Activated CD4-positive, alpha-beta T cell treated with anti-CD3 and anti-CD28 coated beads, Interleukin-2, amount 10 ng/mL, durations not matched to agents 24 days and 14 days (primary cell): ENCODE measurements at regions of chr4 and their contacts with region 1.

Region 1: GRCh38 chr4:98995183-98996055 is at the start of gene METAP1:
- DNase-seq: peak; percentile 98
- H3K4me3 Mint-ChIP-seq: peak within 1 kb of the TSS; percentile 89
- H3K27ac Mint-ChIP-seq: peak within 1 kb of the TSS; percentile 98
- H3K4me1 Mint-ChIP-seq: peaks cover 32% of the 10 kb centered on the region
- H3K27me3 Mint-ChIP-seq: peaks cover 3% of the 10 kb centered on the region
- total RNA-seq, gene METAP1: 61.2 and 63.3 TPM in 2 replicates

Region 2: GRCh38 chr4:98143001-98143899 is 852.2 kb before region 1 on chr4 and contains the start of gene STPG2:
- intact Hi-C with region 1: loop called (anchors 1 kb)
- DNase-seq: peak; percentile 98
- H3K4me3 Mint-ChIP-seq: peak within 1 kb of the TSS; percentile 95
- H3K27ac Mint-ChIP-seq: peak within 1 kb of the TSS; percentile 96
- H3K4me1 Mint-ChIP-seq: peaks cover 11% of the 10 kb centered on the region
- H3K27me3 Mint-ChIP-seq: peaks cover 14% of the 10 kb centered on the region
- total RNA-seq, gene STPG2: not detected in 2 replicates

Region 3: DNA sequence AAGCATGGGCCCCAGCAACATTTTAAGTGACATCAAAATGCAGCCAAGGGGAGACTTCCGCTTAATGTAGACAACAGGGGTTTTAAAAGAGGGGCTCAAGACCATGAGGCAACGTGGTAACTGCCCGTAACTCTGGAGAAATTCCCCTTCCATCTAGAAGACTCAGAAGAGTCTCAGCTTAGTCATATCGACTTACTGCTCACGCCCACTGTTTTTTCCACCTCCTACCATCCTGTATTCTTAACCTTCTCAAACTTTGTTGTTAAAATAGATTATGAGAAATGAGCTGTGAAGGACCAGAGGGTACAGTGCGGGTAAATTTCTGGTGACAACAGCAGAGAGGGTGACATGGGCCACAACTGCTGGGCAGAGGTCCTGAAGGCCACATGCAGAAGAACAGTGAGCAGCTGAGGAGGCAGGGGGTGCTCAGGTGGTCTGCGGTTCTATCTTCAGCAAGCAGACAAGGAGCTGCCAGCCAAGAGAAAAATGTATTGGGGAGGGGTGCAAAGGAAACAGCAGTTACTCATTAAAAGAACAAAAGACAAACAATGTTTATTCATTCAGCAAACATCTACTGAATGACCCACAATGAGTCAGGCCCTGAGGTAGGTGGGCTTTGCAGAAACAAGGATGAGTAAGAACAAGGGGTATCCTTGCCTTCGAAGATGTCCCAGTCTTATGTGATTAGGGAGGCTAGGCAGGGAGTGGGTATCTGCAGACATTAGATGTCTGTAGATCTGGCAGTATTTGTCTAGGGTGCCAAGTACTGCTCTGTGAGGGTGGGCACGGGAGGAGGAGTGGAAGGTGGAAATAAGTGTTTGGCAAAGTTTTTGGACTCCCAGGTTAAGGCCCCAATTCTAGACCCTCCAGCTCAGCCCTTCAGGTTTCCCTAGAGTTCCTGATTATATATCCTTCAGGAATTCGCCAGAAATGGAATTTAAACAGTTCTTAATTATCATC is 512.3 kb before region 1 on chr4:
- intact Hi-C with region 1: loop called (anchors 5 kb)
- DNase-seq: peak; percentile 75
- H3K4me3 Mint-ChIP-seq: peak overlapping the region; percentile 80
- H3K27ac Mint-ChIP-seq: peak overlapping the region; percentile 99
- H3K4me1 Mint-ChIP-seq: peaks cover 79% of the 10 kb centered on the region
- H3K27me3 Mint-ChIP-seq: no peaks in the 10 kb centered on the region

Region 4: DNA sequence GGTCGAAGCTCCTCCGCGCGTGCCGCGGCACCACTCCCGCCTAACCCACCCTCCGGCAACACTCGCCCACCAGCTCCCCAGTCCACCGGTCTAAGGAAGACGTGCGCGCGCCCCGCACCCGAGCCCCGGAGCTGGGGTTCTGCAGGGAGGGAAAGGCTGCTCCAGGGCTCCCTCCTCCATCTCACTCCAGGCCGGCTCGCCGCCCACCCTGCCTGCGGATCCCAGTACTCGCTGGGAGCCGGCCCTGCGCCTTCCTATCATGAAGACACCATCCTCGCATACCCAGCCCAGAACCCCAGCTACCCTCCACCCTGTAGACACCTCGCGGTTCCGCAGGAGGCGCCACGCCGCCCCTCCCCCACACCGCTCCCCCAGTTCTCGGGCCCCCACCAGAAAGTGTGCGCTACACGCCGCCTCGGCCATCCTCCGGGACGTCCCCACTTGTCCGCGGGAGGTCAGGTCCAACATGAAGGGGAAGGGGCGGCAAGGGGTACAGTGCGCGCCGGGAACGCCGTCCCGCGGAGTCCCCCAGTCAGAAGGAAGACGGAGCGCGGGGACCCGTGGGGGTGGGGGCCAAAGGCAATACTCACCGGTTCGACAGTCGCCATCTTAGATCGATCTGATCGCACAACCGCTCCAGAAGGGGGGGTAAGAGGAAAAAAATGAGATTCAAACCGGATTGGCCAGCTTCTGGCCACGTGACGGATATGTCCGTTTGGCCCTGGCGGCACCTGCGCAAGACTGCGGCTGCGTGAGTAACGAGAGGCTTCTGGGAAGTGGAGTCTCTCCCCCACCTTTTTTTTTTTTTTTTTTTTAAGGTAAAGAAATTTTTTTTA is 66.7 kb before region 1 on chr4 and contains the start of gene EIF4E:
- intact Hi-C with region 1: loop called (anchors 1 kb)
- DNase-seq: peak; percentile 98
- H3K4me3 Mint-ChIP-seq: peak within 1 kb of the TSS; percentile 90
- H3K27ac Mint-ChIP-seq: peak within 1 kb of the TSS; percentile 97
- H3K4me1 Mint-ChIP-seq: peaks cover 38% of the 10 kb centered on the region
- H3K27me3 Mint-ChIP-seq: no peaks in the 10 kb centered on the region
- total RNA-seq, gene EIF4E: 151 and 156 TPM in 2 replicates

Region 5: GRCh38 chr4:99024481-99025275 is 29.3 kb after region 1 on chr4:
- intact Hi-C with region 1: no loop called
- DNase-seq: no peak
- H3K4me3 Mint-ChIP-seq: no peak overlapping the region
- H3K27ac Mint-ChIP-seq: no peak overlapping the region
- H3K4me1 Mint-ChIP-seq: peaks cover 26% of the 10 kb centered on the region
- H3K27me3 Mint-ChIP-seq: no peaks in the 10 kb centered on the region

Region 6: GRCh38 chr4:99336553-99336952 is 341.1 kb after region 1 on chr4:
- intact Hi-C with region 1: no loop called
- DNase-seq: no peak
- H3K4me3 Mint-ChIP-seq: no peak overlapping the region
- H3K27ac Mint-ChIP-seq: no peak overlapping the region
- H3K4me1 Mint-ChIP-seq: no peaks in the 10 kb centered on the region
- H3K27me3 Mint-ChIP-seq: no peaks in the 10 kb centered on the region

Region 7: DNA sequence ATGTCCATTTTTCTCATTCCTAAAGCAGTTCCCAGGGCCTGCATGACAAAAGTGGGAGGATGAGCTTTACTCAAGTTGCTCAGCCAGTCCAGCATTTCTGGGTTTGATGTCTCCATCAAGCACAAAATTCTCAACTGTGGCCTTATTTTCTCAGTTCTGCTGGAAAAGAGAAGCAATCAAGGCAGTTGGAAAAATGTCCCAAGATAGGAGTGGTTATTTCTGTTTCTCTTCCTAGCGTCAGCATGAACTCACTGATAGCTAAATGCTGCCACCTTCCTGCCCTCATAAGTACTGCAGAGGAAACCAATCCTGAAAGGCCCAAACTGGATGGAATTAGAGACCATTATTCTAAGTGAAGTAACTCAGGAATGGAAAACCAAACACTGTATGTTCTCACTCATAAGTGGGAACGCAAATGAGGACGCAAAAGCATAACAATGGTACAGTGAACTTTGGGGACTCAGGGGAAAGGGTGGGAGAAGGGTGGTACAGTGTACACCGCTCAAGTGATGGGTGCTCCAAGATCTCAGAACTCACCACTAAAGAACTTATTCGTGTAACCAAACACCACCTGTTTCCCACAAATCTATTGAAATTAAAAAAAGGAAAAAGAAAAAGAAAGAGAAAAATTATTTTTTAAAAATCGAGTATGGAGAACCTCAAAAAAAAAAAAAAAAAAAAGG is 410.2 kb after region 1 on chr4:
- intact Hi-C with region 1: loop called (anchors 2 kb)
- DNase-seq: peak; percentile 88
- H3K4me3 Mint-ChIP-seq: no peak overlapping the region
- H3K27ac Mint-ChIP-seq: no peak overlapping the region
- H3K4me1 Mint-ChIP-seq: peaks cover 12% of the 10 kb centered on the region
- H3K27me3 Mint-ChIP-seq: no peaks in the 10 kb centered on the region

Region 8: GRCh38 chr4:99723612-99724011 is 728.2 kb after region 1 on chr4:
- intact Hi-C with region 1: no loop called
- DNase-seq: no peak
- H3K4me3 Mint-ChIP-seq: no peak overlapping the region
- H3K27ac Mint-ChIP-seq: no peak overlapping the region
- H3K4me1 Mint-ChIP-seq: no peaks in the 10 kb centered on the region
- H3K27me3 Mint-ChIP-seq: peaks cover 10% of the 10 kb centered on the region

Region 9: DNA sequence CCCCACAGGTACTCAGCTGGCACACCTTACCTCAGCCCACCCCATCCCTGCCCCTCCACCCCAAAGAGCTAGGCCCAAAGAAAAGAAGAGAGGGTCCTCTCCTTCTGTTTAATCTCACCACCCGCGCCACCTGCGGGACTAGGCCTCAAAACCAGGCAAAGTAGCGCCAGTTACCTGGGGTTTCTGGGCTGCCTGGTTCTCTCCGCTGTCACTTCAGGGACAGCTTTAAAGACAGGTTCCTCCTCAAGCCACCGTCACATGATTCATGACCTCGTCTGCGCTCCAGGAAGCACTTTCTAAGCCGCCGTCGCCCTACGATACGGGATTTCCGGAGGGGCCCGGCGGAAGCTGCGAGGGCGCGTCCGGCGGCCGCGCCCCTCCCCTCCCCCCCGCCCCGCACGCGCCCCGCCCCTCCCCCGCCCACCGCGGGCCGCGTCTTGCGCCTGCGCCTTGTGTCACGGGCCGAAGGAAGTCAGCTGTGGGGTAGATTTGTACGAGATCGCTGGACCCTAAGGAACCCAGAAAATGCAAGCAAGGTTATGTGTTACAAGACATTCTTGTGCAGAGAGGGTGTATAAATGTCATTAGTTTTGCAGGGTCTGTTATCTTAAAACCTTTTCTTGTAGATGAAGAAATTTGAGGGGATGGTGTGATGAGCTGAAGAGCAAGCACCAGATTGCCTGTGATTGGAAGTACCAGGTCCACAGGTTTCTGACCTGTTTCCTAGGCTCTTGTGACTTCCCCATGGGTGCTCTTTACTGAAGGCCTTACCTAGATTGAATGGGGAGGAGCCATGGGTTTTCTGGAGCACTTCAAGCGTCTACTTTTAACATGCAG is 899.0 kb after region 1 on chr4 and contains the start of gene LAMTOR3:
- intact Hi-C with region 1: no loop called
- DNase-seq: peak; percentile 96
- H3K4me3 Mint-ChIP-seq: peak within 1 kb of the TSS; percentile 94
- H3K27ac Mint-ChIP-seq: peak within 1 kb of the TSS; percentile 94
- H3K4me1 Mint-ChIP-seq: peaks cover 32% of the 10 kb centered on the region
- H3K27me3 Mint-ChIP-seq: no peaks in the 10 kb centered on the region
- total RNA-seq, gene LAMTOR3: 28.0 and 32.8 TPM in 2 replicates

Region 10: GRCh38 chr4:99949034-99949998 is 953.9 kb after region 1 on chr4:
- intact Hi-C with region 1: loop called (anchors 2 kb)
- DNase-seq: peak; percentile 96
- H3K4me3 Mint-ChIP-seq: no peak overlapping the region
- H3K27ac Mint-ChIP-seq: no peak overlapping the region
- H3K4me1 Mint-ChIP-seq: peaks cover 26% of the 10 kb centered on the region
- H3K27me3 Mint-ChIP-seq: no peaks in the 10 kb centered on the region